Right ventricle myocardium superior (tissue), 1 donor: ENCODE measurements at regions of chr17 and their contacts with region 1.

Region 1: GRCh38 chr17:13776027-13776588 is 174.4 kb upstream of the HS3ST3A1 start:
- DNase-seq: no peak
- ATAC-seq: peak; percentile 93

Region 2: DNA sequence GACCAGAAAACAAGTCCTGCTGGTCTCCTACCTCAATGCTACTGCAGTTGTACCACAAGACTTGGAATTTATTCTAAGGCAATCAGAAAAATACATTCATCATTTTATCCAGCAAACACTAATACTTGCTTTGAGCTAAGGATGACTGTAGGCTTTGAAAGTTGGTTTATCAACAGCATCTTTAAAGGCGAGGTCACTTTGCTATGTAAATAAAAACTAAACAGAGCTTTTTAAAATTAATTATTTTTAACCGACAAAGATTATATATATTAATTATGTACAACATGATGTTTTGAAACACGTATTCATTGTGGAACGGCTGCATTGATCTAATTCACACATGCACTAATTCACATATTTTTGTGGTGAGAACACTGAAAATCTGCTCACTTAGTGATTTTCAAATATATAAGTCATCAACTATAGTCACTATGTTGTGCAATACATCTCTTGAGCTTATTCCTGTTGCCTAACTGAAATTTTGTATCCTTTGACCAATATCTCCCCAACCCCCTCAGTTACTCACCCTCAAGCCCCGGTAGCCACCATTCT is 48.5 kb before region 1 on chr17:
- intact Hi-C with region 1: no loop called
- DNase-seq: no peak
- ATAC-seq: no peak

Region 3: DNA sequence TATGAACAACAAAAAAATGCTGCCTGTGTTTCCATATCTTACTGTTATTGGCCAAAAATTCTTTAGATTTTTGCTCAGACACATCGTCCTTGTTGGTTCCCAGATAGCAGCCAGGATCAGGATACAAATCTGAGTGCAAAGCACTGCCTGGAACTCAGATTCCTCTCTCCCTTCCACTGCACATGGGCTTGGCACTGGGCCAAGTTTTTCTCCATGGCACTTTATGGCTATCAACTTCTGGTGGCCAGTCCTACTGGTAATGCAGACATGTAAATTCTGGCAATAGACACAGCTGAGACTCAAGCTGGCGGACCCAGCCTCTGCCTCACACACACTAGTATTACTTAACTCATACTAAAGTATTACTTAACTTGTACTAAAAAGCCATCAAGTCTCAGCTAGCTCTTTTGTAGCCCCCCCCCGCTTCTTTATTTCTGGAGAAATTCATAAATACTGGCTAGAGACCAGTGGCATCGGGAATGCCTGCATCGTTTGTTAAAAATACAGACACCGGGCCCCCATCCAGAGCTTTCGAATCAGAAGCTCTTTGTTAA is 112.0 kb after region 1 on chr17:
- intact Hi-C with region 1: loop called (anchors 10 kb)
- DNase-seq: no peak
- ATAC-seq: peak; percentile 21